ENCODE measurements at regions of chr15 and their contacts with region 1.

Region 1: DNA sequence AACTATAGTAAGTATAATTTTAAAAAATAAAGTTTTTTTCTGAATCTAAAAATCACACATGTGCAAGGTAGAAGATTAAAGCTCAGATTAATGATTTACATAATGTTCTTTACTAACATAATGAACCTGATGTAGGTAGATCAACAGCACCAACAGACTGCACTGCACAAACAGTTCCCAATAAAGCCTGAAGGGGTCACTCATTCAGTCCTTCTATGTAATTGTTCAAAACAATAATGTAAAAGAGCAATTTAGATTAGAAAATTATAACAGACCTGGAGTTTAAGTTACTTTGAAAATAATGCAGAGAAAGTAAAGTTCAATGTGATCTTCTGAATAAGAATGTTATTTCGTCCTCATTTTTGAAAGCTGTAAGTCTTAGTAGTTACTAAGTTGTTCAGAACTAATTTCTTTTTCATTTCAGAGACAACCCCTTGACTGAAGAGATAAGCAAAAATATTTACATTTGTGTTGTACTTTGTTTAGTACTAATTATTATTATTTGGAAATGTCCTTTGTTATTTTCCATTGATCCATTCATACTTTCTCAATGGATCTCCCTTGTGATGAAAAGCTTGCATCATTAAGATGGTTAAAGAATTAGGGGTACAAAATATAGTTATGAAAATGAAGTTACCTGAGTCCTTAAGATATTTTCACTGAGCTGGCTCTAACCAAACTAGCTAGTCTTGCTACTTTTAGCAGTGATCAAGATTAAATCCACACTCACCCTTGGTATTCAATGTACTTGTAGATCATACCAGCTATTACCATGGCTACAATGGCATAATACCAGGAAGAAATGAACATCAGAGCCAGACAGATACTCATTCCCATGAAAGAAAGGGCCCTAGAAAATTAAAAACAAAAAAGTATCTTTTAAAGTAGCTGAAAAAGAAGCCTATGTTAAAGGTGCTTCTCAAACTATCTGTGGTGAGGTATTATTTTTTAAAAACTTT is 16.8 kb downstream of the EMC4 start:
- DNase-seq: peak; percentile 62
- H3K4me3 ChIP-seq: no peak overlapping the region
- H3K27ac ChIP-seq: peak overlapping the region; percentile 99
- H3K4me1 ChIP-seq: peaks cover 29% of the 10 kb centered on the region
- H3K27me3 ChIP-seq: no peaks in the 10 kb centered on the region
- CTCF ChIP-seq: peak; percentile 82 to 88

Region 2: DNA sequence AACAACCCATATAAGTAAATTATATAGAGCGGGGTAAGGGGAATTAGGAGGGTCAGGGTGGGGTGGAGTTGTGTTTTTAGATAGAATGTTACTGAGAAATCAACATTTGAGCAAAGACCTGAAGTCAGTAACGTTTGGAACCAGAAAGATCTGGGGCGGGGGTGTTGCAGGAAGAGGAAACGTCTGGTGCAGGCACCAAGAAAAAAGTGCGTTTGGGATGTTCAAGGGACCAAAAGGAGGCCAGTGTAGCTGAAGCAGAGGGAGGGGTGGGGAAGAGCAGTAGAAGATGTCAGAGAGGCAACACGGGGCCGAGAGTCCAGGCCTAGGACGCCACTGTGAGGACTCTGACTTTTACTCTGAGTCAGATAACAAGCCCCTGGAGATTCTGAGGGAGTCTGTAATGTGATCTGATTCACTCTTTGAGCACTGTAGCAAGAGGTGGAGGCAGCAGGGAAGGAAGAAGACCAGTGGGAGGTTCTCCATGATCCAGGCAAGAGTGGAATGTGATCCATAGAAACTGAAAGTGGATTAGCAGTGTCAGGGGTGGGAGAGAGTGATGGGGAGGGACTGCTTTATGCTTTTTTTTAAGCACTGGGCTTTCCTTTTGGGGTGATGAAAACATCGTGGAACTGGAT is 452.6 kb before region 1 on chr15:
- CTCF ChIA-PET with region 1: no interaction called
- dilution Hi-C with region 1: no loop called
- in situ Hi-C with region 1: no loop called
- intact Hi-C with region 1: no loop called
- DNase-seq: no peak
- H3K4me3 ChIP-seq: no peak overlapping the region
- H3K27ac ChIP-seq: no peak overlapping the region
- H3K4me1 ChIP-seq: no peaks in the 10 kb centered on the region
- H3K27me3 ChIP-seq: peaks cover 5% of the 10 kb centered on the region
- CTCF ChIP-seq: no peak

Region 3: DNA sequence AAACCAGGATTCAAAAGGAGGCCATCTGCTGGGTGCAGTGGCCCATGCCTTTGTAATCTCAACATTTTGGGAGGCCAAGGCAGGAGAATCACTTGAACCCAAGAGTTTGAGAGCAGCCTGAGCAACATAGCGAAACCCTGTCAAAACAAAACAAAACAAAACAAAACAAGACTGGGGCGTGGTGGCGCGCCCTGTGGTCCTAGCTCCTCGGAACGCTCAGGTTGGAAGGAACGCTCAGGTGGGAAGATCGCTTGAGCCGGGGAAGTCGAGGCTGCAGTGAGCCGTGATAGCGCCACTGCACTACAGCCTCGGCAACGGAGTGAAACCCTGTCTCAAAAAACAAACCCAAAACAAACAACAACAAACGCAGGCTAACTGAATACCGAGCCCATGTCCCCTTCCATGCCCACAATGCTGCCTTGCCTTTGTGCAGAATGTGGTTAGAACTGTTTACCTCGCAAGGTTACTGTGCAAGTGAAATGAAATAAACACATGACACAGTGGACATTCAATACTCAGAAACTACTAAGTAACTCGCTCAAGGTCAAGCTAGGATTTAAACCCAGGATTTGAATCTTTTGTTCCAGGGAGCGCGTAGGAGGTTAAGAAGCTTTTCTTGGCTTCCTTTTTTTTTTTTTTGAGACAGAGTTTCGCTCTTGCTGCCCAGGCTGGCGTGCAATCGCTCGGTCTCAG is 17.6 kb before region 1 on chr15:
- CTCF ChIA-PET with region 1: no interaction called
- dilution Hi-C with region 1: no loop called
- in situ Hi-C with region 1: no loop called
- intact Hi-C with region 1: loop called (anchors 1 kb)
- DNase-seq: no peak
- H3K4me3 ChIP-seq: peak overlapping the region; percentile 61 to 82 (median 74)
- H3K27ac ChIP-seq: peak overlapping the region; percentile 75
- H3K4me1 ChIP-seq: peaks cover 6% of the 10 kb centered on the region
- H3K27me3 ChIP-seq: no peaks in the 10 kb centered on the region
- CTCF ChIP-seq: no peak

Region 4: GRCh38 chr15:34297059-34297458 is 55.4 kb after region 1 on chr15:
- CTCF ChIA-PET with region 1: no interaction called
- dilution Hi-C with region 1: loop called (anchors 5 kb)
- in situ Hi-C with region 1: no loop called
- intact Hi-C with region 1: no loop called
- DNase-seq: no peak
- H3K4me3 ChIP-seq: no peak overlapping the region
- H3K27ac ChIP-seq: no peak overlapping the region
- H3K4me1 ChIP-seq: no peaks in the 10 kb centered on the region
- H3K27me3 ChIP-seq: no peaks in the 10 kb centered on the region
- CTCF ChIP-seq: no peak

Region 5: DNA sequence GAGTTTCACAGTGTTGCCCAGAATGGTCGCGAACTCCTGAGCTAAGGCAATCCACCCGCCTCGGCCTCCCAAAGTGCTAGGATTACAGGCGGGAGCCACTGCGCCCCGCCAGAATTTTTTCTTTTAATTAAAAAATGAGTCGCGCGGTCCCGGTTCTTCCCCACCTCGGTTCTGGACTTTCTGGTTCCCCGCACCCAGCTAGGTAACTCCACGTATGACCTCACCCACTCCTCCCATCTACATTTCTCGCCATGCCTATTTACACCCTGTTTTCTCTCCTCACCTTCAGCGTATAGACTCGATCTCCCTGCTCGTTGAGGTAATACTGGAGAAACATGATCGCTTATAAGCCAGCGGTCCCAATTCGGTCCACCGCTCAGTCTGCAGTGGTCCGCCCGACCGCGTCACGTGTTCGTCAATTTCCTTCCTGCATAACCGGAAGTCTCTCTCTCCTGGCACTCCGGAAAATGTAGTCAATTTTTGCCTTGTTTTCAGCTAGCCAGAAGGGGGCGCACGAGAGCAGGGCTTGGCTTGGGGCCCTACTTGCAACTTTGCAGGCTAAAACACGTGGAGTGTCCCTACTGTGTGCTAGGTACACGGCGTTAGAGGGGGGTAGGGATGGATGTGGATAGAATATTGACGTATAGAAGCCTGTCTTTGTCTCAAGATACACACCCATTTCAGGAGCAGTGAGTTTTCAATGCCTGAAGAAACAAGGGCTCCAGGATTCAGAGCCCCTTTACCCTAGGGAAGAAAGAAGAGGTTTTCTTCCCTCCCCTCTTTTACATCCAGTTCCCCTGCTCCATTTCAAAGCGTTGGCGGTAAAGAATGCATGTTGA is 101.3 kb after region 1 on chr15 and contains the starts of genes NOP10 and NUTM1:
- CTCF ChIA-PET with region 1: interaction called, 3 read pairs
- dilution Hi-C with region 1: no loop called
- in situ Hi-C with region 1: loop called (anchors 10 to 25 kb)
- intact Hi-C with region 1: loop called (anchors 1 kb)
- DNase-seq: peak; percentile 87
- H3K4me3 ChIP-seq: peak within 1 kb of the TSS; percentile 91 to 95 (median 94)
- H3K27ac ChIP-seq: peak within 1 kb of the TSS; percentile 87
- H3K4me1 ChIP-seq: peaks cover 3% of the 10 kb centered on the region
- H3K27me3 ChIP-seq: no peaks in the 10 kb centered on the region
- CTCF ChIP-seq: peak; percentile 95 to 96
- total RNA-seq, gene NOP10: 187 to 239 TPM
- total RNA-seq, gene NUTM1: not detected

Region 6: DNA sequence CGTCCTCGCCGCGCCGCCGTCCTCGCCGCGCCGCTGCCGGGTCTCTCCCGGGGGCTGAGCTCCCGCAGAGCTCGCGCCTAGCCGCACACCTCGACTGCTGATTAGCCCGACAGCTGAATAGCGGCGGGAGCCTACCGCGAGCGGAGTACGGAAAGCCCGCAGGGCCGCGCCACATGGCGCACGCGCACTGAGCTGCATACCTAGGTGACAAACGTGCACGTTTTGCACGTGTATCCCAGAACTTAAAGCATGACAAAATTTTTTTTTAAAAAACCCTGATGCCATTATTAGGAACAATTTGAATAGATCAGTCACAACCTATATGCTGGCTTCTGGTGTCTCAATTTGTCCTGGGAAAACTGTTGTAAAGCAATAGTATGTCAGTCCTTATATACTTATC is 196.0 kb after region 1 on chr15 and contains the start of gene GOLGA8A:
- CTCF ChIA-PET with region 1: no interaction called
- dilution Hi-C with region 1: no loop called
- in situ Hi-C with region 1: no loop called
- intact Hi-C with region 1: loop called (anchors 10 kb)
- DNase-seq: peak; percentile 55
- H3K4me3 ChIP-seq: peak within 1 kb of the TSS; percentile 60 to 83 (median 70)
- H3K27ac ChIP-seq: no peak within 1 kb of the TSS
- H3K4me1 ChIP-seq: peaks cover 6% of the 10 kb centered on the region
- H3K27me3 ChIP-seq: peaks cover 2% of the 10 kb centered on the region
- CTCF ChIP-seq: no peak
- total RNA-seq, gene GOLGA8A: 24.0 to 159 TPM